WTC11 (cell line): ENCODE measurements at regions of chr1 and their contacts with region 1.

Region 1: GRCh38 chr1:116737020-116737854 is 17.0 kb upstream of the CD2 start:
- DNase-seq: peak; percentile 67
- ATAC-seq: peak; percentile 89
- H3K4me3 Mint-ChIP-seq: no peak overlapping the region
- H3K27ac Mint-ChIP-seq: no peak overlapping the region
- H3K4me1 Mint-ChIP-seq: no peaks in the 10 kb centered on the region
- H3K27me3 Mint-ChIP-seq: peaks cover 3% of the 10 kb centered on the region; the same call in 1 of the 2 replicates
- CTCF ChIP-seq: peak; percentile 58; the same call in 1 of the 2 replicates

Region 2: DNA sequence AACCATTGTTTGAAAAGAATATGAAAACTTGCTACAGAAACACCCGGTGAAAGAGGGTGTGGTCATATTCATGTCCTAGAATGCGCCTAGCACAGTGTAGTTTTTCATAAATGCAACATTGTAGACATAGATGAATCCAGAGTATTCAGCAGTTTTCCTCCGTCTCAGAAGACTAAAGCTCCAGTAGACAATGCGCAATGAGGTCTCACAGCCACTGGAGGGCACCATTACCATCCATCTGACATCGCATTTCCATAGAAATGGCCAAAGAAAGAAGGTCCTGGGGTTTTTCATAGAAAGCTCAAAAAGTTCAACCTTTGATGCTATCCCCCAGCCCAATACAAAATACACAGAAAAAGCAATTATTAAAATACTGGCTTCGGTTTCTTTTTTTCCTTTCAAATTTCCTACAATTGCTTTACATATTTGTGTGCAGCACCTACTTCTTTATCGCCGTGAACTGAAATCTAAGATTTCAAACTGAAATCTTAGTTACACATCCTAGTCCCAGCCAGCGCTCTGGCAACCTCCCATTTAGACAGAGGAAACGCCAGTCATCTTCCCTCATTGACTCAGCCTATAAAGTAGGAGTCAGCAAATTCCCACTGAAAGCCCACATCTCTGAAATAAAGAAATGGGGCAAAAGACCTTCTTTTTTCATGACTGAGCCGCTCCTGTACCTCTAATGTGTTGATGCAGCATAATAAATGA is 162.5 kb before region 1 on chr1:
- CTCF ChIA-PET with region 1: interaction called, 13 read pairs
- POLR2A ChIA-PET with region 1: no interaction called
- DNase-seq: peak; percentile 60
- ATAC-seq: no peak
- H3K4me3 Mint-ChIP-seq: no peak overlapping the region
- H3K27ac Mint-ChIP-seq: no peak overlapping the region
- H3K4me1 Mint-ChIP-seq: peaks cover 29% of the 10 kb centered on the region
- H3K27me3 Mint-ChIP-seq: peaks cover 17% of the 10 kb centered on the region
- CTCF ChIP-seq: peak; percentile 64

Region 3: GRCh38 chr1:116751146-116751545 is 13.9 kb after region 1 on chr1:
- CTCF ChIA-PET with region 1: interaction called, 11 read pairs
- POLR2A ChIA-PET with region 1: no interaction called
- DNase-seq: no peak
- ATAC-seq: no peak
- H3K4me3 Mint-ChIP-seq: no peak overlapping the region
- H3K27ac Mint-ChIP-seq: no peak overlapping the region
- H3K4me1 Mint-ChIP-seq: no peaks in the 10 kb centered on the region
- H3K27me3 Mint-ChIP-seq: peaks cover 3% of the 10 kb centered on the region
- CTCF ChIP-seq: no peak

Region 4: DNA sequence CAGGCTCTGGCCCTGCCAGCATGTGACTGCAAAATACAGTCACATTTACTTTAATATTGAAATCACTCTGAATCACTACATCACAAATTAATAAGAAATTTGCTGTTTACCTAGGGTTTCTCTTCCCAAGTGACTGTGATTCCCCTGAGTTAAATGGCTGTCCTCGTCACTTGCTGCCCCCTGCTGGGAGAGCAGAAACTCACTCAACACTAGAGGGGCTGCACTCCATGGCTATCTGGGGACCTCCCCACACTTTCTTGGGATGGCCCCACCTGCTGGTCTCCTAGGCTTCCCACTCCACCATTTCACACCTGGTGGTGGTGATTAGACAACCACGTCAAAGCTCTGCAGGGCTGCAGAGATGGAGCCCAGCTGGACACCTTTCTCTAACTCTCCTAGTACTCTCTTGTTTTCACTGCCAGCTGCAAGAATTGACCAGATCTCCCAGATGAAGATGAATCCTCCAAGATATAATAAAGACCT is 80.4 kb after region 1 on chr1:
- CTCF ChIA-PET with region 1: interaction called, 18 read pairs
- POLR2A ChIA-PET with region 1: no interaction called
- DNase-seq: peak; percentile 75
- ATAC-seq: peak; percentile 99
- H3K4me3 Mint-ChIP-seq: no peak overlapping the region
- H3K27ac Mint-ChIP-seq: no peak overlapping the region; the same call in 1 of the 2 replicates
- H3K4me1 Mint-ChIP-seq: peaks cover 9% of the 10 kb centered on the region; the same call in 1 of the 2 replicates
- H3K27me3 Mint-ChIP-seq: peaks cover 2% of the 10 kb centered on the region; the same call in 1 of the 2 replicates
- CTCF ChIP-seq: 0 out of 2 replicates have a peak, but pooled peaks have one; percentile 34

Region 5: GRCh38 chr1:116881879-116882520 is 144.8 kb after region 1 on chr1:
- CTCF ChIA-PET with region 1: interaction called, 39 read pairs
- POLR2A ChIA-PET with region 1: no interaction called
- DNase-seq: peak; percentile 51
- ATAC-seq: peak; percentile 81
- H3K4me3 Mint-ChIP-seq: no peak overlapping the region
- H3K27ac Mint-ChIP-seq: 0 out of 2 replicates have a peak overlapping the region, but pooled peaks have one; percentile 69
- H3K4me1 Mint-ChIP-seq: peaks cover 14% of the 10 kb centered on the region
- H3K27me3 Mint-ChIP-seq: no peaks in the 10 kb centered on the region
- CTCF ChIP-seq: no peak

Region 6: DNA sequence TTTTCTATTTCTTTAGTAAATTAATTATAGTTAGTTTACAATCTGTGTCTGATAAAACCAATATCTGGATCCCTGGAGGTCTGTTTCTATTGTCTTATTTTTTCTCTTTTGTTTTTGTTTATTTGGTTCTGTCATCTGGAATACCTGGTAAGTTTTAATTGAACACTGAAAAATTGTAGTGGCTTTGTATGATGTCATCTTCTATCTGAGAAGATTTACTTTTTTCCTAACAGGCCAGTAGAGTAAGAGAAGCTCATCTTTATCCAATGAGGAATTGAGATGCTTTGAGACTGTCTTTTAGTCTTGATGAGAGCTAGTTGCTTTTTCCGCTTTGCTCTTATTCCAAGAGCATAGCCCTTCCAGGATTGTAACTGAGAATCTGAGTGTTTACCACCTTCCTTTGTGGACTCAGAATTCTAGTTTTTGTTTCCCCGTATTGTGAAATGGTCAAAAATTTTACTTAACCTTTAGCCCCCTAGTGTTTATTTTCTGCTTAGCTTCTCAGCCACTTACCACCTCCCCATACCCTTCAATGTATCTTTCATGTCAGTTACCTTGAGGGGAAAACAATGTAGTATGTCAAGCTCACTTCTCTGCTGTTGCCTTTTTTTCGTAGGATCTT is 197.5 kb after region 1 on chr1:
- CTCF ChIA-PET with region 1: interaction called, 10 read pairs
- POLR2A ChIA-PET with region 1: no interaction called
- DNase-seq: no peak
- ATAC-seq: no peak; the same call in 1 of the 2 replicates
- H3K4me3 Mint-ChIP-seq: no peak overlapping the region
- H3K27ac Mint-ChIP-seq: peak overlapping the region; percentile 12
- H3K4me1 Mint-ChIP-seq: peaks cover 31% of the 10 kb centered on the region
- H3K27me3 Mint-ChIP-seq: no peaks in the 10 kb centered on the region
- CTCF ChIP-seq: 0 out of 2 replicates have a peak, but pooled peaks have one; percentile 23